ENCODE measurements at regions of chr1 and their contacts with region 1.

Region 1: GRCh38 chr1:192580351-192580962 is 4.9 kb downstream of the RGS1 start:
- DNase-seq: peak; percentile 16
- H3K4me3 ChIP-seq: peak overlapping the region in 1 of 4 donors; percentile 29
- H3K27ac ChIP-seq: peak overlapping the region; percentile 61 to 72 (median 63)
- H3K4me1 ChIP-seq: peaks cover 0 to 8% (median 0%) of the 10 kb centered on the region in 4 donors
- H3K27me3 ChIP-seq: no peaks in the 10 kb centered on the region
- CTCF ChIP-seq: peak in 3 of 5 experiments; percentile 18 to 27 (median 22)
- EP300 ChIP-seq: no peak
- POLR2A ChIP-seq: no peak

Region 2: DNA sequence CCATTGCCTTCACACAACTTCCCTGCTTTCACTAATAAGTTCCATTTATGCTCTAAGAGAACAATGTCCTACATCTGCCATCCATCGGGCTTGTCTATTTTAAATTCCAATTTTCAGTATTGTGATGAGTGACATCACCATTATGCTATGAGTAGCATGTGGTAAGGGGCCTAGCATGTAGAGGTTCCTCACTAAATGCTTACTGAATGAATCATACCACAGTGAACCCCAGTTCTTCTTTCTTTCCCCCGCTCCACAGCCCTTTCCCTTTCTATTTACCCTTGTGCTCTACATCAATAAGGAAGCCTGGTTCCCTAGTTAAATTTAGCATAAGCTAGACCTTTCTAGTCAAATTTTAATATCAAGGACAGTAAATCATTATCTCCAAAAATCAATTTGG is 617.2 kb before region 1 on chr1:
- in situ Hi-C with region 1: no loop called
- intact Hi-C with region 1: no loop called
- DNase-seq: no peak
- H3K4me3 ChIP-seq: no peak overlapping the region
- H3K27ac ChIP-seq: no peak overlapping the region
- H3K4me1 ChIP-seq: no peaks in the 10 kb centered on the region
- H3K27me3 ChIP-seq: no peaks in the 10 kb centered on the region
- CTCF ChIP-seq: no peak
- EP300 ChIP-seq: no peak
- POLR2A ChIP-seq: no peak

Region 3: GRCh38 chr1:192489748-192490147 is 90.7 kb before region 1 on chr1:
- in situ Hi-C with region 1: no loop called
- intact Hi-C with region 1: loop called (anchors 10 kb)
- DNase-seq: peak; percentile 41
- H3K4me3 ChIP-seq: no peak overlapping the region
- H3K27ac ChIP-seq: peak overlapping the region; percentile 67 to 84 (median 72)
- H3K4me1 ChIP-seq: peaks cover 0 to 15% (median 3%) of the 10 kb centered on the region in 4 donors
- H3K27me3 ChIP-seq: no peaks in the 10 kb centered on the region
- CTCF ChIP-seq: no peak
- EP300 ChIP-seq: peak; percentile 80
- POLR2A ChIP-seq: no peak

Region 4: GRCh38 chr1:192709544-192709943 is 129.1 kb after region 1 on chr1:
- in situ Hi-C with region 1: no loop called
- intact Hi-C with region 1: no loop called
- DNase-seq: no peak
- H3K4me3 ChIP-seq: no peak overlapping the region
- H3K27ac ChIP-seq: no peak overlapping the region
- H3K4me1 ChIP-seq: no peaks in the 10 kb centered on the region
- H3K27me3 ChIP-seq: no peaks in the 10 kb centered on the region
- CTCF ChIP-seq: no peak
- EP300 ChIP-seq: no peak
- POLR2A ChIP-seq: no peak

Region 5: DNA sequence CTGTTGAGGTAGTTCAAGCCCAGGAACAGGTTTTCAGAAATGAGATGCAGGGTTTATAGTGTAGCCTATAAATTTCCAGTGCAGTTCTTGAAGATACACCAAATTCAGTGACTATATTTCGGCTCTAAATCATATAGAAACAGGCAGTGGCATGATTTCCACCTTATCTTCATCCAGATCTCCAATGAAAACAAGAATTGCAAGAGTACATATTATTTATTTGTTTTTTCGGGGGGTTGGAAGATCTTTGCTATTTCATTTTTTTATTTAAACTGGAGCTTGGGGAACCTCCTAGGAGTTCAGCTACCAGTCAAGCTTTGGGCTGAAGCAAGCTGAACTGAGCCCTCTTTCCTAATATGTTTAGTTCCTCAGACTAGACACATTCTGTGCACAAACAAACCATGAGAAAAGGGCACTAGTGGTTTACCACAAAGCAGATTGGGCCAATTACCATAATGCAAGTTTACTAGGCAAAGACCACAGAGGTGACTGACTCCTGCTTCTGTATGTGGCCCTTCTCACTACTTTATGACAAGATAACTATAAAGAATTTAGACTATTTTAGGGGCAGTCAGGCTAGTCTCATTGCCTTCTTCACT is 296.9 kb after region 1 on chr1:
- in situ Hi-C with region 1: no loop called
- intact Hi-C with region 1: no loop called
- DNase-seq: no peak
- H3K4me3 ChIP-seq: no peak overlapping the region
- H3K27ac ChIP-seq: peak overlapping the region in 3 of 4 donors; percentile 30 to 66 (median 56)
- H3K4me1 ChIP-seq: peaks cover 0 to 19% (median 10%) of the 10 kb centered on the region in 4 donors
- H3K27me3 ChIP-seq: no peaks in the 10 kb centered on the region
- CTCF ChIP-seq: no peak
- EP300 ChIP-seq: no peak
- POLR2A ChIP-seq: no peak

Region 6: GRCh38 chr1:193192586-193192985 is 612.1 kb after region 1 on chr1:
- in situ Hi-C with region 1: no loop called
- intact Hi-C with region 1: no loop called
- DNase-seq: no peak
- H3K4me3 ChIP-seq: no peak overlapping the region
- H3K27ac ChIP-seq: no peak overlapping the region
- H3K4me1 ChIP-seq: peaks cover 0 to 29% (median 19%) of the 10 kb centered on the region in 4 donors
- H3K27me3 ChIP-seq: no peaks in the 10 kb centered on the region
- CTCF ChIP-seq: no peak
- EP300 ChIP-seq: no peak
- POLR2A ChIP-seq: no peak

Measured in transverse colon (tissue), 4 donors.